HepG2 (cell line): ENCODE measurements at regions of chr4 and their contacts with region 1.

Region 1: DNA sequence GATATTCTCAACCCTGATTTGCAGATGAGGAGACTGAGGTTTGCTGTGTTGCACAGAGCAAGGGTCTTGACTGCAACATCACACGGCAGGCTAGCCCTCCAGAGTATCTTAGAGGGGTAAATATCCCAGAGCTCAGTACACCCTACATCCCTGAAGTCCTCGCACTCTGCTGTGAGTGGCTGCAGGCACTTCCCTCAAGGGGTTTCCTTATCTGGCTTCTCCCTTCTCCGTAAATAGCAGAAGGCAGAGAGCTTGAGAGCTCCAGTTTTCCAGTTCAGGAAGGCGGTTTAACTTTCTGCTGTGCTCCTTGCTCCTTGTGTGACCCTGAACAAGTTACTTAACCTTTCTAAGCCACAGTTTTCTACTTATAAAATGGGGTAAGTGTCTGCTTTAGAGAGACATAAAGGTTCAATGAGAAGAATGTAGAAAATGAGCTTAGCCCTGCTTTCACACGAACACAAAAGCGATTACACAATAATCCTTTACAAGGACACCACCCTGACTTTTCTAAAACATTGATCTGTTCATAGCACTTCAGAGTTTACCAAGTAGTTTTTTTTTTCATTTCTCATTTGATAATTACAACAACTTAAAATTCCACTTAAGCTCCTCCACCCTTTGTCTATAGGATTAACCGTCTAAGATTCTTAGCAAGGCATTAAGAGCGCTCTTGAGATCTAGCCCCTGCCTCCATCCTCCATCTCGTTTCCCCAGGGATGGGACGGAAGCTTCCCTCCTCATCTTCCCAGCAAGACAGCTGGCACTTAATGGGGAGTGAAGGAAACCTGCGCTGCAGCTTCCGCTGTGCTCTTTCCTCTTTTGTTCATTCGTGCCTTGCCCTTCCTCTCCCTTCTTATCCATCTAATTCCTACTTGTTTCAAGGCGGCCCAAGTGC is 68.4 kb downstream of the TAPT1 start:
- DNase-seq: peak; percentile 26
- ATAC-seq: peak; percentile 55
- H3K4me3 ChIP-seq: no peak overlapping the region
- H3K27ac ChIP-seq: no peak overlapping the region
- H3K4me1 ChIP-seq: peaks cover 19% of the 10 kb centered on the region
- H3K27me3 ChIP-seq: no peaks in the 10 kb centered on the region
- CTCF ChIP-seq: no peak
- EP300 ChIP-seq: no peak
- POLR2A ChIP-seq: no peak
- RAD21 ChIP-seq: no peak

Region 2: DNA sequence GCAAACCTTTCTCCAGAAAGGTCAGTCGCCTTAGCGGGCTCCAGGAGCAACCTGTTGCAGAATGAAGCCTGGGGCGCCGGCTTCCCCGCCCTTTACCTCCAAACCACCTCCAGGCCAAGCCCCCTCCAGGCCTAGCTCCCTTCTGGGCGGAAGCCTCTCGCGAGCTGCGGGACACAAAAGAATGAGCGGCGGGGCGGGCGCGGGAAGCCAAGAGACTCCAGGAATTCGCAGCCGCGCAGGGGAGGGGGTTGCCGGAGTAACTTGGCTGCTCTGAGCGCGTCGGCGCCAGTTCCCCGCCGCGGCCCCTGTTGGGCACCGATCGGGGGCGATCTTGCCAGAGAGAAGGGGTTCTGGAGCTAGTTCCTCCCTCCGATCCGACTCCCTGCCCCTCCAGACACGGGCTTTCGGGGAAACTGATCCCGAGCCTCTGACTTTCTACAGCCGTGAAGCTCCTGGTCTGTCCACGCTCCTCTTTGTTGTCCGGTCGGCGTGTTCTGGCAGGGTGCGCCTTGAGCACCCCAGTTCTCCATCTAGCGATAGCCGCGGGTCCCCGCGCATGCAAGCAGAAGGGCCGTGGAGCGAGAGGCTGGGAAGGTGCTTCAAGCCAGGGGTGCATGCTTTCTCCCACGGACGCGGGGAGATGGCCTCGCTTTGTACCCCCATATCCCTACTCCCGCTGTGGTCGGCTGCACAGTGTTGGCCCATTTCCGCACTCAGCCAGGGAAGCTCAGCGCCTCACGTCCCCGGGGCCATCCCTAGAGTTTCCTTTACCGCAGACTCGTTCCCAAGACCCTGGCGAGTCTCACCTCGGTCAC is 75.2 kb before region 1 on chr4:
- CTCF ChIA-PET with region 1: no interaction called
- POLR2A ChIA-PET with region 1: no interaction called
- in situ Hi-C with region 1: no loop called
- intact Hi-C with region 1: loop called (anchors 2 kb)
- DNase-seq: peak; percentile 39
- ATAC-seq: peak; percentile 76
- H3K4me3 ChIP-seq: peak overlapping the region; percentile 32 to 76 (median 61); a peak in 5 of 6 replicates
- H3K27ac ChIP-seq: no peak overlapping the region
- H3K4me1 ChIP-seq: peaks cover 16% of the 10 kb centered on the region
- H3K27me3 ChIP-seq: peaks cover 5 to 46% of the 10 kb centered on the region in 2 experiments; a peak in 4 of 5 replicates
- CTCF ChIP-seq: peak; percentile 32; the same call in 1 of the 2 replicates
- EP300 ChIP-seq: no peak
- POLR2A ChIP-seq: no peak
- RAD21 ChIP-seq: no peak

Region 3: GRCh38 chr4:16090096-16090705 is 67.7 kb before region 1 on chr4:
- CTCF ChIA-PET with region 1: no interaction called
- POLR2A ChIA-PET with region 1: no interaction called
- in situ Hi-C with region 1: loop called (anchors 5 kb)
- intact Hi-C with region 1: no loop called
- DNase-seq: no peak
- ATAC-seq: no peak
- H3K4me3 ChIP-seq: no peak overlapping the region
- H3K27ac ChIP-seq: no peak overlapping the region
- H3K4me1 ChIP-seq: peaks cover 11% of the 10 kb centered on the region
- H3K27me3 ChIP-seq: peaks cover 2 to 8% of the 10 kb centered on the region in 2 experiments; a peak in 2 of 5 replicates
- CTCF ChIP-seq: no peak
- EP300 ChIP-seq: no peak
- POLR2A ChIP-seq: no peak
- RAD21 ChIP-seq: no peak

Region 4: DNA sequence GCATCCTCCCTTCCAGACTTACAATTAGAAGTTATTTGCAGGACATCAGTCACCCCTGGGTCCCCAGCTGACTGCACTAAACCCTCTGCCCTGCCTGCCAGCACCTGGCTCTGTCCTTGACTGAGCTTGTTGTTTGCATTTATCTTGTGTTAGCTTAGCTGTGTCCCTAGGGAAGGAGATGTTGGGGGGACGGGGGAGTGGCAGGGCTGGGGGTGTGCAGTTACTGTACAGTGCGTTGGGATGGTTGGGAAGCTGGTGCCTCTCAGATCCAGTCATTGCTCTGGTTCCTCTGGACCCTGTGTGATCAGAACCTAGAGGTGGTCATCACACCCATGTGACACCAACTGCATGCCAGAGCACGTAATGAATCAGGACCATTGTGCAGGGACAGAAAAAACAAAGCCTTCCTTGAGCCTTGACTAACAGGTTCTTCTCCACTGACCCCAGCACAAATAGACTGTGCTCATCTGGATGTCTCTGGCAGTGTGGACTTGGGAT is 41.3 kb before region 1 on chr4:
- CTCF ChIA-PET with region 1: no interaction called
- POLR2A ChIA-PET with region 1: no interaction called
- in situ Hi-C with region 1: no loop called
- intact Hi-C with region 1: loop called (anchors 10 kb)
- DNase-seq: peak; percentile 73
- ATAC-seq: peak; percentile 87
- H3K4me3 ChIP-seq: peak overlapping the region in 1 of 3 experiments; percentile 25; a peak in 1 of 6 replicates
- H3K27ac ChIP-seq: peak overlapping the region; percentile 31
- H3K4me1 ChIP-seq: peaks cover 70% of the 10 kb centered on the region
- H3K27me3 ChIP-seq: no peaks in the 10 kb centered on the region; a peak in 1 of 5 replicates
- CTCF ChIP-seq: 0 out of 2 replicates have a peak, but pooled peaks have one; percentile 6
- EP300 ChIP-seq: no peak
- POLR2A ChIP-seq: no peak
- RAD21 ChIP-seq: no peak

Region 5: DNA sequence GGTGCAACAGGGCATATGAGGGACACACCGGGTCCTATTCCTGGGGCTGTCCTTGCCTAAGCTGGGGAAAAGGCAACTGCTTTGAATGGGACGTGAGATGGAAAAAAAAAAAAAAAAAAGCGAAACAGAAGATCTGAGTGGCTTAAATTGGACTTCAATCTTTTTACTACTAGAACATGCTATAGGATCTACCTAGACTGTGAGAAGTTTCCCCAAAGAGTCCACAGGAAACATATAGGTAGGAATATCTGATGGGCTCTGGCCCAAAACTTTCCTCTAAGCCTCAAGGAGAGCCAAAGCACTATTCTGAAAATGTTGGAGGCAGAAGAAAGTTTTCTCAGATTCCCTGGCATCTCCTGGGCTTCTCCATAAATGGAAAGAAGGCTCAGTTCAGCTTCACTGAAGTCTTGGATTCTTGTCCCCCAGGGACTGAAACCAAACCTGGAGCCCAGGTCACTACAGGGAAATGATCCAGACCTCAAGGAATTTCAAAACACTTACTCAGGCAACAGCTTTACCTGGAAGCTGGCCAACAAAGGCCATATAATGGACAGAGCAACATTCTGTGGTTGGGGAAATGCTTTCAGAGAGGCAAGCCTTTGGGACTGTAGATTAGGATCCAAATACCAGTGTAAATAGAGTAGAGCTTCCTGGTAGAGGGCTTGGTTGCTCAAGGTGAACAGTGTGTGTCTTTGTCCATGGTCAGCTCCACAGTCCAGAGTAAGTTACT is 17.2 kb before region 1 on chr4:
- CTCF ChIA-PET with region 1: no interaction called
- POLR2A ChIA-PET with region 1: no interaction called
- in situ Hi-C with region 1: no loop called
- intact Hi-C with region 1: loop called (anchors 1 kb)
- DNase-seq: peak; percentile 99
- ATAC-seq: peak; percentile 99
- H3K4me3 ChIP-seq: no peak overlapping the region; a peak in 1 of 6 replicates
- H3K27ac ChIP-seq: peak overlapping the region; percentile 72
- H3K4me1 ChIP-seq: peaks cover 64% of the 10 kb centered on the region
- H3K27me3 ChIP-seq: no peaks in the 10 kb centered on the region; a peak in 1 of 5 replicates
- CTCF ChIP-seq: no peak
- EP300 ChIP-seq: peak in 1 of 2 experiments; percentile 87; a peak in 2 of 4 replicates
- POLR2A ChIP-seq: no peak
- RAD21 ChIP-seq: no peak

Region 6: DNA sequence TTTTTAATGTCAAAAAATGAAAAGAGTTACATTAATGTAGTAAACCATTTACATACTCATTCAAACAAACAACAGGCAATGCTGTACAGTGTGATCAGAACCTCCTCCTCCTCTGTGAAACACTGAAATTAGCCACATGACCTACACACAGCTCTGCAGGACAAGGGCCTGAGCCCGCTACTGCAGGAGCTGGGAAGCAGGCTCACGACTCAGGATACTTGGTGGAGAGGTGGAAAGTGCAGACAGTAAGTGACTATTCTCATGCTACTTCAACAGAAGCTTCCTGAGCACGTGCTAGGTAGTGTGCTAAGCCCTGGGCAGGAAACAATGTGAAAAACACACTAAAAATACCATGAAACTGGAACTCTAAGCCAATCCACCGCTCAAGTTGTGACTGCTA is 11.6 kb after region 1 on chr4:
- CTCF ChIA-PET with region 1: no interaction called
- POLR2A ChIA-PET with region 1: no interaction called
- in situ Hi-C with region 1: no loop called
- intact Hi-C with region 1: no loop called
- DNase-seq: no peak
- ATAC-seq: no peak
- H3K4me3 ChIP-seq: no peak overlapping the region
- H3K27ac ChIP-seq: no peak overlapping the region
- H3K4me1 ChIP-seq: no peaks in the 10 kb centered on the region
- H3K27me3 ChIP-seq: no peaks in the 10 kb centered on the region; a peak in 1 of 5 replicates
- CTCF ChIP-seq: no peak
- EP300 ChIP-seq: no peak
- POLR2A ChIP-seq: no peak
- RAD21 ChIP-seq: no peak